ENCODE measurements at regions of chr15 and their contacts with region 1.

Region 1: GRCh38 chr15:26838742-26839460 is 28.0 kb upstream of the GABRA5 start:
- DNase-seq: no peak
- H3K4me3 ChIP-seq: no peak overlapping the region
- H3K27ac ChIP-seq: no peak overlapping the region
- H3K4me1 ChIP-seq: no peaks in the 10 kb centered on the region
- H3K27me3 ChIP-seq: peaks cover 39% of the 10 kb centered on the region
- CTCF ChIP-seq: peak; percentile 46

Region 2: GRCh38 chr15:26461847-26462608 is 376.9 kb before region 1 on chr15:
- intact Hi-C with region 1: loop called (anchors 10 kb)
- DNase-seq: no peak
- H3K4me3 ChIP-seq: no peak overlapping the region
- H3K27ac ChIP-seq: no peak overlapping the region
- H3K4me1 ChIP-seq: no peaks in the 10 kb centered on the region
- H3K27me3 ChIP-seq: no peaks in the 10 kb centered on the region
- CTCF ChIP-seq: no peak